K562 (cell line): ENCODE measurements at regions of chr1 and their contacts with region 1.

Region 1: DNA sequence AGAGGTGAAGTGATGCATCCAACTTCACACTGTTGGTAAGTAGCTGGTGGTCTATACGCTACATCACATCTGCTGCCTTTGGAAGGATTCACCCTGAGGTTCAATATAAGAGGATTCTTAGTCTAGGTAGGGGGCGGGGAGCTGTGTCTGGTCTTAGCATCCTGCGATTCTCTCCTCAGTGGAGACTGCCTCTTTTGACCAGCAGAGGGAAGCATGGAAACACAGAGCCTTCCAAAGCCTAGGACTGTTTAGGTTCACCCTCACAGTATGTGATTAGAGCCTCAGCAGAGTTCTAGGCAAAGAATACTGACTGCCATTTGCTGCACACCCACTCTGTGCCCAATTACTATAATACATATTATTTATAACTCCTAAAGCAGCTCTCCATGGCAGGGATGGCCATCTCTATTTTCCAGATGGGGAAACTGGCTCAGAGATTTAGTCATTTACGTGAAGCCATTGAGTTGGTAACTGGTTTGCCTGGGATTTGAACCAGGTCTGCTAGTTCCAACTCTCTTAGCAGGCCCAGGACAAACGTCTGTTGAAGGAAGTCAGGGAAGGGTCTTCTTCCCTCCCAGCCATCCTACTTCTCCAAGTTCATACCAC is 28.9 kb upstream of the EFCAB14 start:
- DNase-seq: peak; percentile 64 to 70 (median 68)
- ATAC-seq: peak; percentile 100
- H3K4me3 ChIP-seq: no peak overlapping the region
- H3K27ac ChIP-seq: no peak overlapping the region
- H3K4me1 ChIP-seq: no peaks in the 10 kb centered on the region
- H3K27me3 ChIP-seq: peaks cover 2 to 5% of the 10 kb centered on the region in 2 experiments; a peak in 1 of 5 replicates
- CTCF ChIP-seq: peak; percentile 70 to 84 (median 79)
- EP300 ChIP-seq: no peak
- POLR2A ChIP-seq: no peak
- RAD21 ChIP-seq: peak; percentile 52 to 80

Region 2: DNA sequence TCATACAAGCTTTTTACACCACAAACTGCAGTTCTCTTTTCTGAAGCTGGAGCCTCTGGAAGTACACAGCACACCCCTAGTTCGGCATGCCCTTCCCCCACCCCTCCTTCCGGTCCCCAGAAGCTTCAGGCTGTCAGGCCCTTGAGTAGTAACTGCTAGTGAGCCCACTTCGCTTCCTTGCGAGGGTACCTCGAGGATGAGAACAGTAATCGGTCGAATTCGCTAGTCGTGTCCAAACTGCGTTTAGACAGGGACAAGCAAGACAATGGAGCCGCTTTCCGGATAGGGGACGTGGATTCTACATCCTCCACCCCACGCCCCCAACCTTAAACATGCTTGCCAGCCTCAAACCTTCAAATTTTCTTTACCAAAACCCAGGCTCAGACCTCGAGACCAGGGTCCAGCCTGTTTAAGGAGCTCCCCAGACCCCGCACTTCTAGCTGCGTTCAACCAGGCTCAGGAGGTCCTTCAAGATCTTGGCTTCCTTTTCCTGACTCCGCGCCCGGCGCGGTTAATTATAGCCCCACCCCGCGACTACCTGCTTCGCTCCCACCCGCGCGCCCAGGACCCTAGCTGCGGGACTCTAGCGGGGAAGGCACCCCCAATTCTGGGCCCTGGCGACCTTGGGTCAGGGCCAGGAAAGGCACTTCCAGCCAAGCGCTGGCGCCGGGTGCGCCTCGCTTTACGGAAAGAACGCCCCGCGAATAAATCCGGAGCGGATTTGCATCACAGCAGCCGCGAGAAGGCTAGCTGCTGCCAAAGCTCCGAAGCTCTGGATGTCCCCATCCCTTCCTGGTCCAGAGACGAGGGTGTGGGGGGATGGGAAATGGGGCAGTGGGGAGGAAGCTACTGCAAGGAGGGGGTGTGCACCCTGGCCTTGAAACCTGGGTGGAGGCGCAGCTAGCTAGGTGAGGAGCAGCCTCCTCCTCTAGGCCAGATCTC is 581.0 kb before region 1 on chr1:
- CTCF ChIA-PET with region 1: no interaction called
- POLR2A ChIA-PET with region 1: no interaction called
- in situ Hi-C with region 1: no loop called
- intact Hi-C with region 1: no loop called
- DNase-seq: no peak
- ATAC-seq: no peak
- H3K4me3 ChIP-seq: no peak overlapping the region
- H3K27ac ChIP-seq: no peak overlapping the region
- H3K4me1 ChIP-seq: peaks cover 0 to 19% of the 10 kb centered on the region in 2 experiments; a peak in 3 of 5 replicates
- H3K27me3 ChIP-seq: peaks cover 9 to 23% of the 10 kb centered on the region in 2 experiments
- CTCF ChIP-seq: no peak
- EP300 ChIP-seq: no peak
- POLR2A ChIP-seq: no peak
- RAD21 ChIP-seq: no peak

Region 3: GRCh38 chr1:46527474-46528296 is 220.1 kb before region 1 on chr1:
- CTCF ChIA-PET with region 1: no interaction called
- POLR2A ChIA-PET with region 1: no interaction called
- in situ Hi-C with region 1: no loop called
- intact Hi-C with region 1: no loop called
- DNase-seq: peak; percentile 87 to 94 (median 89)
- ATAC-seq: peak; percentile 87
- H3K4me3 ChIP-seq: no peak overlapping the region
- H3K27ac ChIP-seq: no peak overlapping the region; the same call in 2 of the 3 replicates
- H3K4me1 ChIP-seq: peaks cover 47 to 50% of the 10 kb centered on the region in 2 experiments
- H3K27me3 ChIP-seq: no peaks in the 10 kb centered on the region
- CTCF ChIP-seq: peak; percentile 98 to 99 (median 99)
- EP300 ChIP-seq: peak; percentile 50; the same call in 1 of the 2 replicates
- POLR2A ChIP-seq: no peak
- RAD21 ChIP-seq: peak; percentile 100

Region 4: GRCh38 chr1:46595127-46595526 is 152.7 kb before region 1 on chr1:
- CTCF ChIA-PET with region 1: no interaction called
- POLR2A ChIA-PET with region 1: no interaction called
- in situ Hi-C with region 1: no loop called
- intact Hi-C with region 1: no loop called
- DNase-seq: peak; percentile 45 to 58 (median 51)
- ATAC-seq: peak; percentile 56
- H3K4me3 ChIP-seq: no peak overlapping the region
- H3K27ac ChIP-seq: peak overlapping the region; percentile 23; the same call in 2 of the 3 replicates
- H3K4me1 ChIP-seq: peaks cover 11 to 21% of the 10 kb centered on the region in 2 experiments; a peak in 4 of 5 replicates
- H3K27me3 ChIP-seq: no peaks in the 10 kb centered on the region
- CTCF ChIP-seq: no peak
- EP300 ChIP-seq: no peak
- POLR2A ChIP-seq: no peak
- RAD21 ChIP-seq: no peak

Region 5: DNA sequence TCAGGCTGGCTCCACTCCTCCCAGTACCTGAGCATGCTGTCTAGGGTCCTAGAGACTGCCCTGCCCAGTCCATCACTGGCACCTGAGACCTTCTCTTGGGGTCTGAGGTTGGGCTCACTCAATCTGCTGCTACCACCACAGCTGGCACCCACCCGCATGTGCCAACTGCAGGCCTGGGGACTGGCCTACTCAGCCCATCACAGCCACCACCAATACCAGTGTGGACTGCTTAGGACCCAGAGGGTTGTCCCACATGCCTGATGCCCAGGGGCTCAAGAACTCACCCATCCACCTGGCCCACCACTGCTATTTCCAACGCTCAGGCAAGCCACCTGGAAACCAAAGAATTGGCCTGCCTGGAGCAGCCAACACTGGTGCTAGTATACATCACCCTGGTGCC is 114.6 kb after region 1 on chr1:
- CTCF ChIA-PET with region 1: no interaction called
- POLR2A ChIA-PET with region 1: no interaction called
- in situ Hi-C with region 1: no loop called
- intact Hi-C with region 1: loop called (anchors 5 kb)
- DNase-seq: no peak
- ATAC-seq: no peak
- H3K4me3 ChIP-seq: no peak overlapping the region
- H3K27ac ChIP-seq: no peak overlapping the region
- H3K4me1 ChIP-seq: no peaks in the 10 kb centered on the region
- H3K27me3 ChIP-seq: peaks cover 0 to 4% of the 10 kb centered on the region in 2 experiments; a peak in 2 of 5 replicates
- CTCF ChIP-seq: no peak
- EP300 ChIP-seq: no peak
- POLR2A ChIP-seq: no peak
- RAD21 ChIP-seq: no peak

Region 6: GRCh38 chr1:46969014-46969619 is 221.3 kb after region 1 on chr1:
- CTCF ChIA-PET with region 1: no interaction called
- POLR2A ChIA-PET with region 1: no interaction called
- in situ Hi-C with region 1: no loop called
- intact Hi-C with region 1: no loop called
- DNase-seq: peak in 3 of 4 experiments; percentile 7 to 14 (median 11)
- ATAC-seq: peak; percentile 70
- H3K4me3 ChIP-seq: no peak overlapping the region
- H3K27ac ChIP-seq: no peak overlapping the region
- H3K4me1 ChIP-seq: no peaks in the 10 kb centered on the region
- H3K27me3 ChIP-seq: peaks cover 0 to 6% of the 10 kb centered on the region in 2 experiments; a peak in 1 of 5 replicates
- CTCF ChIP-seq: peak; percentile 26 to 52 (median 49); a peak in 5 of 6 replicates
- EP300 ChIP-seq: no peak
- POLR2A ChIP-seq: no peak
- RAD21 ChIP-seq: no peak

Region 7: DNA sequence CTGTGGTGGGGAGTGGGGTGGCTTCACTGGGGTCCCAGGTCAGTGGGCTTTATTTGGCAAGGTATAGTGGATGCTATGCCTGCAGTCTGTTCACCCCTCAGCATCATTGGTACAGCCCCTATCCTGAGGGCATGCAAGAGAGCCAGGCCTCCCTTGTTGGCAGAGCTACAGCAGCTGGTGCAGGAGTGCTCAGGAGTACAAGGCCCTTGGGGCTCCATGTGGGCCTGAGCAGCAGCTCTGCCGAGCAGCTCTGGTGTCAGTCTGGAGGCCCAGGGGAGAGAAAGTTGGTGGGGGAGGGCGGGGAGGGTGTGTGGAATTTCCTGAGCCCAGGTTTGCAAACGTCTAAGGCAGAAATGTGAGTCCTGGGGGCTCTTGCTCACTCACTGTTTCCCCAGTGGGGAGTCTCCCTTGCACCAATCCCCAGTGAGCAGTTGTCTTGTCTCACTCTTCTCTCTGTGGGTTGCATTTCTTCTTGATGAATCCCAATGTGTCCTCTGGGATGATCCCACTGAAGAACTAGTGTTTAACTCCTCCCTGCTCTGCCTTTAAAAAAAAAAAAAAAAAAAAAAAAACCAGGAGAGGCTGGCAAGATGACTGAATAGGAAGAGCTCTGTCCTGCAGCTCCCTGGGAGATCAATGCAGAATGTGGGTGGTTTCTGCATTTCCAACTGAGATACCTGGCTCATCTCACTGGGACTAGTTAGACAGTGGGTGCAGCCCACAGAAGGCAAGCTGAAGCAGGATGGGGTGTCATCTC is 236.2 kb after region 1 on chr1:
- CTCF ChIA-PET with region 1: interaction called, 3 read pairs
- POLR2A ChIA-PET with region 1: no interaction called
- in situ Hi-C with region 1: loop called (anchors 10 kb)
- intact Hi-C with region 1: no loop called
- DNase-seq: no peak
- ATAC-seq: no peak
- H3K4me3 ChIP-seq: no peak overlapping the region
- H3K27ac ChIP-seq: no peak overlapping the region
- H3K4me1 ChIP-seq: no peaks in the 10 kb centered on the region
- H3K27me3 ChIP-seq: no peaks in the 10 kb centered on the region; a peak in 1 of 5 replicates
- CTCF ChIP-seq: no peak
- EP300 ChIP-seq: no peak
- POLR2A ChIP-seq: no peak
- RAD21 ChIP-seq: no peak

Region 8: GRCh38 chr1:46991083-46991923 is 243.5 kb after region 1 on chr1:
- CTCF ChIA-PET with region 1: no interaction called
- POLR2A ChIA-PET with region 1: no interaction called
- in situ Hi-C with region 1: loop called (anchors 10 kb)
- intact Hi-C with region 1: loop called (anchors 10 kb)
- DNase-seq: peak in 3 of 4 experiments; percentile 2 to 25 (median 16)
- ATAC-seq: peak; percentile 84
- H3K4me3 ChIP-seq: no peak overlapping the region
- H3K27ac ChIP-seq: no peak overlapping the region
- H3K4me1 ChIP-seq: no peaks in the 10 kb centered on the region
- H3K27me3 ChIP-seq: peaks cover 0 to 5% of the 10 kb centered on the region in 2 experiments; a peak in 2 of 5 replicates
- CTCF ChIP-seq: peak; percentile 38 to 61 (median 44); a peak in 4 of 6 replicates
- EP300 ChIP-seq: no peak
- POLR2A ChIP-seq: no peak
- RAD21 ChIP-seq: peak in 1 of 2 experiments; percentile 64; a peak in 2 of 4 replicates